ENCODE measurements at regions of chr5 and their contacts with region 1.

Region 1: DNA sequence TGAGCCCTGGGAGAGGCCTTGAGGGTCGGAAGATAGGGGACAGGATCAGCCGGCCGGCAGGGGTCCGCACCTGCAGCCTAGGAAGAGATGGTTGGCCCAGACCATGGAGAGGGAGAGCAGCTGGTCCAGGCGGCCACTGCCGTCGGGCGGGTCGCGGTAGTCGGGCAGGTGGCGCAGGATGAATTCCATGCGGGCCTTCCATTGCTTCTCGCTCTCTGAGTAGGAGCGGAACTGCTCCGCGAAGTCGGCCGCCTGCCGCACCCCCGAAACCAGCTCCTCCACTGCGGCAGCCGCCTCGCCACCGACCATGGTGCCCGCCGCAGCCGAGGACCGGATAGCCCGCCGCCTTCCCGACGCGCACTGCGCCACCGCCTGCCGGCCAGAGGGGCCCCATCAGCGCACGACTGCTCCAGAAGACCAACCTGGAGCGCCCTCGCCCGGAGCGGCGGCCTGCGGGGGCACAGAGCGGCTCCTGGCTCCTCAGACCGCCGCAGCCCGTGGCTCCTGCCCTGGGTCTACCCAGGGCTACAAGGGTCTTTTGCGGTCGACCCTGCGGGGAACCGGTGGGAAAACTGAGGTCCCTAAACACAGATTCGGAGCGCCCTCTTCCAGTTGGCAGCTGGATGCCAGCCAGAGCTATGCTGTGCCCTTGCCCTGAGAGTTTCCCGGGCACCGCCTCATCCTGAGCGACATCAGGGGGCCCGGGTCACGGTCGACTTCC is at the start of gene CDKN2AIPNL:
- DNase-seq: peak; percentile 87 to 91 (median 88)
- H3K4me3 ChIP-seq: peak within 1 kb of the TSS; percentile 79 to 93
- H3K4me3 Mint-ChIP-seq: peak within 1 kb of the TSS; percentile 89 to 94 (median 91)
- H3K27ac ChIP-seq: peak within 1 kb of the TSS; percentile 70
- H3K27ac Mint-ChIP-seq: peak within 1 kb of the TSS; percentile 84 to 95 (median 91)
- H3K4me1 ChIP-seq: peaks cover 30% of the 10 kb centered on the region
- H3K4me1 Mint-ChIP-seq: peaks cover 18 to 47% (median 33%) of the 10 kb centered on the region in 4 donors
- H3K27me3 ChIP-seq: no peaks in the 10 kb centered on the region
- H3K27me3 Mint-ChIP-seq: no peaks in the 10 kb centered on the region
- total RNA-seq, gene CDKN2AIPNL: 14.7 to 15.1 TPM

Region 2: GRCh38 chr5:134304311-134304710 is 107.4 kb before region 1 on chr5:
- CTCF ChIA-PET with region 1: interaction called, 9 read pairs
- POLR2A ChIA-PET with region 1: no interaction called
- intact Hi-C with region 1: loop called (anchors 5 kb)
- DNase-seq: no peak
- H3K4me3 ChIP-seq: no peak overlapping the region
- H3K4me3 Mint-ChIP-seq: no peak overlapping the region
- H3K27ac ChIP-seq: no peak overlapping the region
- H3K27ac Mint-ChIP-seq: no peak overlapping the region
- H3K4me1 ChIP-seq: no peaks in the 10 kb centered on the region
- H3K4me1 Mint-ChIP-seq: no peaks in the 10 kb centered on the region
- H3K27me3 ChIP-seq: no peaks in the 10 kb centered on the region
- H3K27me3 Mint-ChIP-seq: no peaks in the 10 kb centered on the region

Region 3: GRCh38 chr5:134370871-134371833 is 40.6 kb before region 1 on chr5 and contains the start of gene UBE2B:
- CTCF ChIA-PET with region 1: interaction called, 20 read pairs
- POLR2A ChIA-PET with region 1: interaction called, 41 read pairs
- intact Hi-C with region 1: loop called (anchors 1 kb)
- DNase-seq: peak; percentile 98 to 99 (median 98)
- H3K4me3 ChIP-seq: peak within 1 kb of the TSS; percentile 86 to 92
- H3K4me3 Mint-ChIP-seq: peak within 1 kb of the TSS; percentile 96 to 99 (median 98)
- H3K27ac ChIP-seq: peak within 1 kb of the TSS; percentile 99
- H3K27ac Mint-ChIP-seq: peak within 1 kb of the TSS; percentile 97 to 100 (median 100)
- H3K4me1 ChIP-seq: peaks cover 52% of the 10 kb centered on the region
- H3K4me1 Mint-ChIP-seq: peaks cover 40 to 78% (median 49%) of the 10 kb centered on the region in 4 donors
- H3K27me3 ChIP-seq: no peaks in the 10 kb centered on the region
- H3K27me3 Mint-ChIP-seq: peaks cover 0 to 5% of the 10 kb centered on the region in 2 donors
- total RNA-seq, gene UBE2B: 121 to 124 TPM

Region 4: GRCh38 chr5:134465816-134466240 is 54.1 kb after region 1 on chr5:
- CTCF ChIA-PET with region 1: interaction called, 6 read pairs
- POLR2A ChIA-PET with region 1: interaction called, 10 read pairs
- intact Hi-C with region 1: no loop called
- DNase-seq: peak; percentile 20 to 49 (median 30)
- H3K4me3 ChIP-seq: peak overlapping the region; percentile 61
- H3K4me3 Mint-ChIP-seq: peak overlapping the region; percentile 82 to 90 (median 88)
- H3K27ac ChIP-seq: peak overlapping the region; percentile 42
- H3K27ac Mint-ChIP-seq: peak overlapping the region; percentile 47 to 90 (median 85)
- H3K4me1 ChIP-seq: peaks cover 21% of the 10 kb centered on the region
- H3K4me1 Mint-ChIP-seq: peaks cover 2 to 26% (median 12%) of the 10 kb centered on the region in 4 donors
- H3K27me3 ChIP-seq: no peaks in the 10 kb centered on the region
- H3K27me3 Mint-ChIP-seq: no peaks in the 10 kb centered on the region

Region 5: GRCh38 chr5:134555890-134556311 is 144.2 kb after region 1 on chr5:
- CTCF ChIA-PET with region 1: interaction called, 5 read pairs
- POLR2A ChIA-PET with region 1: interaction called, 17 read pairs
- intact Hi-C with region 1: no loop called
- DNase-seq: peak; percentile 72 to 98 (median 79)
- H3K4me3 ChIP-seq: peak overlapping the region in 1 of 2 donors; percentile 14
- H3K4me3 Mint-ChIP-seq: peak overlapping the region in 7 of 8 donors; percentile 46 to 81 (median 63)
- H3K27ac ChIP-seq: peak overlapping the region; percentile 95
- H3K27ac Mint-ChIP-seq: peak overlapping the region; percentile 94 to 99 (median 98)
- H3K4me1 ChIP-seq: peaks cover 44% of the 10 kb centered on the region
- H3K4me1 Mint-ChIP-seq: peaks cover 35 to 53% (median 42%) of the 10 kb centered on the region in 4 donors
- H3K27me3 ChIP-seq: no peaks in the 10 kb centered on the region
- H3K27me3 Mint-ChIP-seq: no peaks in the 10 kb centered on the region

Region 6: GRCh38 chr5:134586866-134587524 is 175.3 kb after region 1 on chr5:
- CTCF ChIA-PET with region 1: interaction called, 27 read pairs
- POLR2A ChIA-PET with region 1: interaction called, 4 read pairs
- intact Hi-C with region 1: loop called (anchors 1 kb)
- DNase-seq: peak; percentile 73 to 78 (median 75)
- H3K4me3 ChIP-seq: no peak overlapping the region
- H3K4me3 Mint-ChIP-seq: peak overlapping the region in 5 of 8 donors; percentile 26 to 53 (median 49)
- H3K27ac ChIP-seq: no peak overlapping the region
- H3K27ac Mint-ChIP-seq: peak overlapping the region in 5 of 7 donors; percentile 9 to 76 (median 22)
- H3K4me1 ChIP-seq: peaks cover 4% of the 10 kb centered on the region
- H3K4me1 Mint-ChIP-seq: peaks cover 4 to 10% (median 8%) of the 10 kb centered on the region in 4 donors
- H3K27me3 ChIP-seq: no peaks in the 10 kb centered on the region
- H3K27me3 Mint-ChIP-seq: no peaks in the 10 kb centered on the region